ENCODE measurements at regions of chr16 and their contacts with region 1.

Region 1: DNA sequence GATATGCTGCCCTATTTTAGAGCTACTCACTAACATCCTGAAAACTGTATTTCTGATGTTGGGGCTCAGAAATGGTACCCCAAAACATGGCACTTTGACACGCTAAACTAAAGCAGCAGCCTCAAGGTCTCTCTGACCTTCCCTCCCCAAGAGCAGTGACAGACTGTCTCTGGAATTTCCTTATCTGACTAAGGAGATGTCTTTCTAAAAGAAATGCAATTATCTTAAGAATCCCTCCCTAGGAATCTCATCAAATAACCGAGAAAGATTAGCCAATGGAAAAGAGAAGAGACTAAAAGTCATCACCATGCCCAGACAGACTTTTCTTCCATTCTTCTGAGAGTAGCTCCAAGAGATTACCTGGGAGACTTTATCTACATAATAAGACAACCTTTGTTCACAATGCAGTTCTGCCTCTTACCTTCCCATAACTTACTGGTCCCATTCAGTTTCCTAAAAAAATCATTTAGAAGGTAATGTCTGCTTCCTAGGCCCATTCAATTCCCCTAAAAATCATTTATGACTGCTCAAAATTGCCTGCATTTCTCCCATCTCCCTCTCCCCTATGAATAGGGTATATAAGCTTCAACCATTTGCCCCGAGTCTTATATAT is 123.9 kb downstream of the CPPED1 start:
- DNase-seq: no peak
- H3K4me3 ChIP-seq: no peak overlapping the region
- H3K27ac ChIP-seq: no peak overlapping the region
- H3K4me1 ChIP-seq: no peaks in the 10 kb centered on the region
- H3K27me3 ChIP-seq: no peaks in the 10 kb centered on the region
- CTCF ChIP-seq: no peak

Region 2: GRCh38 chr16:12340151-12340733 is 339.5 kb before region 1 on chr16:
- CTCF ChIA-PET with region 1: no interaction called
- dilution Hi-C with region 1: no loop called
- in situ Hi-C with region 1: no loop called
- intact Hi-C with region 1: no loop called
- DNase-seq: peak; percentile 59
- H3K4me3 ChIP-seq: no peak overlapping the region
- H3K27ac ChIP-seq: no peak overlapping the region
- H3K4me1 ChIP-seq: peaks cover 8% of the 10 kb centered on the region
- H3K27me3 ChIP-seq: no peaks in the 10 kb centered on the region
- CTCF ChIP-seq: peak; percentile 39 to 57

Region 3: GRCh38 chr16:12771341-12771798 is 91.6 kb after region 1 on chr16:
- CTCF ChIA-PET with region 1: no interaction called
- dilution Hi-C with region 1: loop called (anchors 5 kb)
- in situ Hi-C with region 1: no loop called
- intact Hi-C with region 1: no loop called
- DNase-seq: peak; percentile 48
- H3K4me3 ChIP-seq: no peak overlapping the region
- H3K27ac ChIP-seq: no peak overlapping the region
- H3K4me1 ChIP-seq: no peaks in the 10 kb centered on the region
- H3K27me3 ChIP-seq: no peaks in the 10 kb centered on the region
- CTCF ChIP-seq: no peak